ENCODE measurements at regions of chrX and their contacts with region 1.

Region 1: GRCh38 chrX:7132335-7133049 is 15.0 kb upstream of the STS start:
- DNase-seq: peak; percentile 92
- H3K4me3 ChIP-seq: no peak overlapping the region
- H3K27ac ChIP-seq: no peak overlapping the region
- H3K4me1 ChIP-seq: peaks cover 16% of the 10 kb centered on the region
- H3K27me3 ChIP-seq: no peaks in the 10 kb centered on the region
- CTCF ChIP-seq: peak; percentile 76 to 79

Region 2: GRCh38 chrX:7083468-7084396 is 48.8 kb before region 1 on chrX:
- CTCF ChIA-PET with region 1: no interaction called
- dilution Hi-C with region 1: no loop called
- in situ Hi-C with region 1: no loop called
- intact Hi-C with region 1: loop called (anchors 5 kb)
- DNase-seq: peak; percentile 96
- H3K4me3 ChIP-seq: no peak overlapping the region
- H3K27ac ChIP-seq: no peak overlapping the region
- H3K4me1 ChIP-seq: peaks cover 13% of the 10 kb centered on the region
- H3K27me3 ChIP-seq: peaks cover 7% of the 10 kb centered on the region
- CTCF ChIP-seq: no peak

Region 3: DNA sequence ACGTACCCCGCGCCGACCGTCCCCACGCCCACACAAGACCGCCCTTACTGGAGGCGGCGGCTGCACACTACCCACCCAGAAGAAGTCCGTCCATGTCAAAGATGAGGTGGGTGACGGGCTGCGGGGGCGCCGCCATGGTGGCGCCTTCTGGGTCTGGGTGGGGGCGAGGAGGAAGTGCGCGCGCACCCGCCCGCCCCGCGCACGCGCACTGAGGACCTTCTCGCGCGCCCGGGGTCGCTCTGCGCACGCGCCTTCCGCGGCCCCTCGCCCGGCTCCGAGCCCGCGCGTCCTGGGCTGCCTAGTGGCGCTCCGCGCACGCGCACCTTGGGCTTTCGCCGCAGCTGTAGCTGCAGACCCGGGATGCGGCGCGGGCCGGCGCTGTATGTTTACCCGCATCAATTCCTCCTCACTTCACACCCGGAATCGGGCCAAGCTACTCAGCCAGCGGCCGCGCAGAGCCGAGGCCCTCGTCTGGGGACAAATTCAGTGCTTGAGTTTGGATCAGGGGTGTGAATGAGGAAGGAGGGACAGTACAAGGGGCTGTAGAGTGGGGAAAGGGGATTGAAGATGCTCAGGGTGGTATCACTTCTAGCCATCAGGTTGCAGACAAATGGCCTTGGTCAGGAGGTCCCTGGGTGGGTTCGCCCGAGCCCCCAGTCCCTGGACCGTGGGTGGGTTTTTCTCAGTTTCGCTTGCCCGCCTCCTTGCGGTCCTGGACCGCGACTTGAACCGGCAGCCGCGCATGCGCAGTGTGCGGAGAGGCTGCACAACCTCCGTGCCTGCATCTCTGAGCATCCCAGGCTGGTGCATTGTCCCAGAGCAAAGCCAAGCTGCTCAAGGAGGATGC is 15.7 kb after region 1 on chrX and contains the start of gene PUDP:
- CTCF ChIA-PET with region 1: interaction called, 3 read pairs
- dilution Hi-C with region 1: no loop called
- in situ Hi-C with region 1: no loop called
- intact Hi-C with region 1: loop called (anchors 2 kb)
- DNase-seq: peak; percentile 76
- H3K4me3 ChIP-seq: peak within 1 kb of the TSS; percentile 71 to 97 (median 78)
- H3K27ac ChIP-seq: peak within 1 kb of the TSS; percentile 49
- H3K4me1 ChIP-seq: no peaks in the 10 kb centered on the region
- H3K27me3 ChIP-seq: no peaks in the 10 kb centered on the region
- CTCF ChIP-seq: peak in 1 of 2 donors; percentile 31
- total RNA-seq, gene PUDP: 6.8 to 19.1 TPM

Region 4: GRCh38 chrX:7170903-7171302 is 38.4 kb after region 1 on chrX:
- CTCF ChIA-PET with region 1: no interaction called
- dilution Hi-C with region 1: no loop called
- in situ Hi-C with region 1: no loop called
- intact Hi-C with region 1: loop called (anchors 1 kb)
- DNase-seq: no peak
- H3K4me3 ChIP-seq: no peak overlapping the region
- H3K27ac ChIP-seq: no peak overlapping the region
- H3K4me1 ChIP-seq: no peaks in the 10 kb centered on the region
- H3K27me3 ChIP-seq: no peaks in the 10 kb centered on the region
- CTCF ChIP-seq: peak; percentile 38 to 49

Region 5: DNA sequence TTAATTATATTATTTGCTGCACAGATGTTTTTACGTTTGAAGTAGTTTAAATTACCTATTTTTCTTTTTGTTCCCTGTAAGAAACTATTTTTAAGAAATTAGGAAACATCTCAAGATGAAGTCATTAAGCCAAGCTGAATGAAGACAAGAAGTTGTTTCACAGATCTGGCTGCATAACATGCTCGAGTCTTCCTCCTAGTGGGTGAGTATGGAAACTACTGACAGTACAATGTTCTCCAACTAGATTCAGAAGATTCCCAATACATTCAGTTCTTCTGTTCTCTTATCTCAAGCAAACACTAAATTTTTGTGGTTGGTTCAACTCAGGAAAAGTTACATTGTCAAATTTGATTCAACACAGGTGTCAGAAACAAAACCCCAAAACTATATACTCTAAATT is 453.6 kb after region 1 on chrX:
- CTCF ChIA-PET with region 1: no interaction called
- dilution Hi-C with region 1: no loop called
- in situ Hi-C with region 1: no loop called
- intact Hi-C with region 1: loop called (anchors 2 kb)
- DNase-seq: peak; percentile 16
- H3K4me3 ChIP-seq: no peak overlapping the region
- H3K27ac ChIP-seq: no peak overlapping the region
- H3K4me1 ChIP-seq: no peaks in the 10 kb centered on the region
- H3K27me3 ChIP-seq: peaks cover 2% of the 10 kb centered on the region
- CTCF ChIP-seq: peak; percentile 57 to 71

Region 6: GRCh38 chrX:7706032-7706431 is 573.5 kb after region 1 on chrX:
- CTCF ChIA-PET with region 1: no interaction called
- dilution Hi-C with region 1: no loop called
- in situ Hi-C with region 1: no loop called
- intact Hi-C with region 1: loop called (anchors 1 kb)
- DNase-seq: no peak
- H3K4me3 ChIP-seq: no peak overlapping the region
- H3K27ac ChIP-seq: no peak overlapping the region
- H3K4me1 ChIP-seq: peaks cover 2% of the 10 kb centered on the region
- H3K27me3 ChIP-seq: no peaks in the 10 kb centered on the region
- CTCF ChIP-seq: peak; percentile 17 to 56

Region 7: GRCh38 chrX:7925867-7926472 is 793.5 kb after region 1 on chrX:
- CTCF ChIA-PET with region 1: no interaction called
- dilution Hi-C with region 1: no loop called
- in situ Hi-C with region 1: no loop called
- intact Hi-C with region 1: loop called (anchors 10 kb)
- DNase-seq: peak; percentile 65
- H3K4me3 ChIP-seq: peak overlapping the region in 2 of 3 experiments; percentile 79 to 82
- H3K27ac ChIP-seq: no peak overlapping the region
- H3K4me1 ChIP-seq: peaks cover 13% of the 10 kb centered on the region
- H3K27me3 ChIP-seq: no peaks in the 10 kb centered on the region
- CTCF ChIP-seq: peak; percentile 91 to 95